Activated CD4-positive, alpha-beta T cell treated with anti-CD3 and anti-CD28 coated beads, Interleukin-2, amount 10 ng/mL, durations not matched to agents 7 days and 5 days (primary cell): ENCODE measurements at regions of chr10 and their contacts with region 1.

Region 1: DNA sequence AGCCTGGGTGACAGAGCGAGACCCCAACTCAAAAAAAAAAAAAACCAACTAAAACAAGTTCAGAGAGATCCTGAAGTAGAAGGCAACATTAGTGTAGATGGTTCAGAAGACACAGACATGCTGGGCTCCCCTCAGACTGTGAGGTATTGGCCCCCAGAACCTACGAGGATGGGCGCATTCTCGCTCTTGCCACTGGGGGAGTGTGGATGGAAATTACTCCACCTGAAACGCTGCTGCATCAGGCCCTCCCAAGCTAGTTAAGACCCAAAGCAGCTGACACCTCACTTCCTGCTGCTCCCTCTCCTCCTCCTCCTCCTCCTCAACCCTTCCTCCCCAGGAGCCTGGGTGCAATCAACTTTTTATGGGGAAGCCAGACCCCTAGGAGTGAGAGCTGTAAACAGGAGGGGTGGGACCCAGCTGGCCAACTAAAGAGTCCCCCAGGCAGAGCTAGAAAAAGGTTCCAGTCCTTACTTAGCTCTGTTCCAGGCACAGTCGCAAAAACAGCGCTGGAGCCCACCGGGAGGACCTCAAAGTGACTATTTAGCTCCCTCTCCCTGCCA is 7.4 kb downstream of the SH3PXD2A start:
- DNase-seq: peak; percentile 16
- H3K4me3 Mint-ChIP-seq: no peak overlapping the region
- H3K27ac Mint-ChIP-seq: no peak overlapping the region
- H3K4me1 Mint-ChIP-seq: peaks cover 25% of the 10 kb centered on the region
- H3K27me3 Mint-ChIP-seq: peaks cover 33% of the 10 kb centered on the region

Region 2: DNA sequence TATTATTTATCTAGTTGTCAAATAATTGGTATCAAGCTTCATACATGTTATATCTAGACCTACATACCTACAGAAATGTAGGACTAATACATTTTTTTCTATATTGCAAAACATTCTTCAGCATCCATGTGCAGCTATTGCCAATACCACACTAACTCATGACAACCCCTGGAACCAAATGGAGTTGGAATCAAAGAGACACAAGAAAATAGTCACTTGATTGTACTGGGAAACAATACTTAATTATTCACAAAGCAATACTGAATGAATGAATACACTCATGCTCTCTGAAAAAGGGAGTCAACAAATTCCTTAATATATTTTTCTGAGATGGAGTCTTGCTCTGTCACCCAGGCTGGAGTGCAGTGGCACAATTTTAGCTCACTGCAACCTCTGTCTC is 394.6 kb after region 1 on chr10:
- CTCF ChIA-PET with region 1: no interaction called
- POLR2A ChIA-PET with region 1: interaction called, 15 read pairs
- DNase-seq: no peak
- H3K4me3 Mint-ChIP-seq: no peak overlapping the region
- H3K27ac Mint-ChIP-seq: no peak overlapping the region
- H3K4me1 Mint-ChIP-seq: peaks cover 10% of the 10 kb centered on the region
- H3K27me3 Mint-ChIP-seq: peaks cover 20% of the 10 kb centered on the region